Naive thymus-derived CD4-positive, alpha-beta T cell (primary cell): ENCODE measurements at regions of chr14 and their contacts with region 1.

Region 1: DNA sequence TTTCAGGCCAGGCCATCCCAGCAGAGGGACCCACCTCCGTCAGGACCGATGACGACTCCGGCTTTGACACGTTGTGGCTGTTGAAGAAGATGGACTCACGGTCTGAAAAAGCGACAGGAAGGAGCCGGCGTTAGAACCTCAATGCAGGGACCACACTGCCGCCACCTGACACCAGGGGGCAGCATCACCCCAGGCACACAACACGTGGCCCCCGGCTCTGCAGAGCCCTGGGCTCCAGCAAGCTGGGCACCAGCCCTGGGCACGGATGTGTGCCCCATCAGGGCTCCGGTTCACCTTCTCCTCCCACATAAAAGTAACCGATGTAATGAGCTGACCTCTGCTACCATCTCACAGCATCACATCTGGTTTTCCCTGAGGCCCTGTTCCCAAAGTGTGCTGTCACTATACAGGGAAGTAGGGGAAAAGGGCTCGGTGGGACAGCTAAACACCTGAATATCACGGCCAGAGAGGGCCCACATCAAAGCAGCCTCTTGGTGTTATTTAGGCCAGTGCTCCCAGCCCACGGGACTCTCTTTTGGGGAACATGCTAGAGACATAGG is 29.0 kb downstream of the CHGA start:
- DNase-seq: peak; percentile 48 to 84 (median 74)
- ATAC-seq: peak; percentile 93
- H3K4me3 ChIP-seq: no peak overlapping the region
- H3K4me3 Mint-ChIP-seq: no peak overlapping the region
- H3K27ac ChIP-seq: no peak overlapping the region
- H3K27ac Mint-ChIP-seq: peak overlapping the region in 1 of 9 donors; percentile 26
- H3K4me1 ChIP-seq: no peaks in the 10 kb centered on the region
- H3K4me1 Mint-ChIP-seq: peaks cover 0 to 9% (median 5%) of the 10 kb centered on the region in 7 donors
- H3K27me3 ChIP-seq: no peaks in the 10 kb centered on the region
- H3K27me3 Mint-ChIP-seq: no peaks in the 10 kb centered on the region

Region 2: DNA sequence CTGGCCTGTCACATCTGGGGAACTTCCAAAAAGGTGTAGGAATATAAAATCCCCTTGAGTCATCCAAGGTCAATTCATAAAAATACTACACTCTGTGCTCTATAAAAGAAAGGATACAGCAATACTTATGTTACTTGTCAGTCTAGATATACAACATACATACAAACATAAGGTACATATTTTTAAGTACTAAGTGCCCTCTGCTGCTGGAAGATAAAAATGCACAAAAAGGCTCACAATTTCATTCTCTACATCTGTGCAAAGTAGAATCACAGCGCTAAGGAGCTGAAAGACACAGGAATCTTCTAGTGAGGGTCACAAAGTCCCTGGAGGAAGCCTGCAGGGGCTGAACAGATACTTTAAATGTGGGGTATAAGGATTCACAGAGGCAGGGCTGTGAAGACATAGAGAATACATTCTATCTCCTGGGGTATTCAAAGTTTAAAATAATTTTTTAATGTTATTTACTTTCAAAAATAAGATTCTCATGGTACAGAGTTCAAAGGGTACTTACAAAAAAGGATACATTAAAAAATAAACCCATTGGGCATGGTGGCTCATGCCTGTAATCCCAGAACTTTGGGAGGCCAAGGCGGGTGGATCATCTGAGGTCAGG is 168.1 kb before region 1 on chr14:
- CTCF ChIA-PET with region 1: no interaction called
- POLR2A ChIA-PET with region 1: no interaction called
- intact Hi-C with region 1: no loop called
- DNase-seq: peak in 7 of 9 donors; percentile 31 to 65 (median 47)
- ATAC-seq: peak; percentile 81
- H3K4me3 ChIP-seq: no peak overlapping the region
- H3K4me3 Mint-ChIP-seq: no peak overlapping the region
- H3K27ac ChIP-seq: no peak overlapping the region
- H3K27ac Mint-ChIP-seq: no peak overlapping the region
- H3K4me1 ChIP-seq: no peaks in the 10 kb centered on the region
- H3K4me1 Mint-ChIP-seq: peaks cover 0 to 20% (median 0%) of the 10 kb centered on the region in 7 donors
- H3K27me3 ChIP-seq: no peaks in the 10 kb centered on the region
- H3K27me3 Mint-ChIP-seq: peaks cover 0 to 4% (median 0%) of the 10 kb centered on the region in 5 donors

Region 3: GRCh38 chr14:93033983-93034670 is 82.1 kb after region 1 on chr14:
- CTCF ChIA-PET with region 1: no interaction called
- POLR2A ChIA-PET with region 1: no interaction called
- intact Hi-C with region 1: no loop called
- DNase-seq: peak in 7 of 9 donors; percentile 15 to 31 (median 29)
- ATAC-seq: peak; percentile 71
- H3K4me3 ChIP-seq: no peak overlapping the region
- H3K4me3 Mint-ChIP-seq: peak overlapping the region; percentile 17 to 79 (median 51)
- H3K27ac ChIP-seq: no peak overlapping the region
- H3K27ac Mint-ChIP-seq: peak overlapping the region in 8 of 9 donors; percentile 65 to 91 (median 72)
- H3K4me1 ChIP-seq: peaks cover 13 to 17% of the 10 kb centered on the region in 2 donors
- H3K4me1 Mint-ChIP-seq: peaks cover 21 to 34% (median 26%) of the 10 kb centered on the region in 7 donors
- H3K27me3 ChIP-seq: no peaks in the 10 kb centered on the region
- H3K27me3 Mint-ChIP-seq: no peaks in the 10 kb centered on the region

Region 4: GRCh38 chr14:93056166-93056839 is 104.3 kb after region 1 on chr14:
- CTCF ChIA-PET with region 1: no interaction called
- POLR2A ChIA-PET with region 1: no interaction called
- intact Hi-C with region 1: no loop called
- DNase-seq: no peak
- ATAC-seq: peak; percentile 34
- H3K4me3 ChIP-seq: no peak overlapping the region
- H3K4me3 Mint-ChIP-seq: no peak overlapping the region
- H3K27ac ChIP-seq: no peak overlapping the region
- H3K27ac Mint-ChIP-seq: peak overlapping the region in 1 of 9 donors; percentile 54
- H3K4me1 ChIP-seq: peaks cover 0 to 7% of the 10 kb centered on the region in 2 donors
- H3K4me1 Mint-ChIP-seq: peaks cover 10 to 29% (median 17%) of the 10 kb centered on the region in 7 donors
- H3K27me3 ChIP-seq: no peaks in the 10 kb centered on the region
- H3K27me3 Mint-ChIP-seq: no peaks in the 10 kb centered on the region

Region 5: GRCh38 chr14:93137864-93138263 is 185.9 kb after region 1 on chr14:
- CTCF ChIA-PET with region 1: interaction called, 7 read pairs
- POLR2A ChIA-PET with region 1: no interaction called
- intact Hi-C with region 1: loop called (anchors 1 kb)
- DNase-seq: no peak
- ATAC-seq: no peak
- H3K4me3 ChIP-seq: no peak overlapping the region
- H3K4me3 Mint-ChIP-seq: no peak overlapping the region
- H3K27ac ChIP-seq: no peak overlapping the region
- H3K27ac Mint-ChIP-seq: no peak overlapping the region
- H3K4me1 ChIP-seq: no peaks in the 10 kb centered on the region
- H3K4me1 Mint-ChIP-seq: peaks cover 2 to 6% (median 4%) of the 10 kb centered on the region in 7 donors
- H3K27me3 ChIP-seq: no peaks in the 10 kb centered on the region
- H3K27me3 Mint-ChIP-seq: no peaks in the 10 kb centered on the region

Region 6: GRCh38 chr14:93173943-93174395 is 222.0 kb after region 1 on chr14:
- CTCF ChIA-PET with region 1: no interaction called
- POLR2A ChIA-PET with region 1: no interaction called
- intact Hi-C with region 1: loop called (anchors 1 to 2 kb)
- DNase-seq: no peak
- ATAC-seq: no peak
- H3K4me3 ChIP-seq: no peak overlapping the region
- H3K4me3 Mint-ChIP-seq: no peak overlapping the region
- H3K27ac ChIP-seq: no peak overlapping the region
- H3K27ac Mint-ChIP-seq: no peak overlapping the region
- H3K4me1 ChIP-seq: no peaks in the 10 kb centered on the region
- H3K4me1 Mint-ChIP-seq: peaks cover 0 to 4% (median 0%) of the 10 kb centered on the region in 7 donors
- H3K27me3 ChIP-seq: no peaks in the 10 kb centered on the region
- H3K27me3 Mint-ChIP-seq: no peaks in the 10 kb centered on the region

Region 7: GRCh38 chr14:93219103-93219726 is 267.2 kb after region 1 on chr14:
- CTCF ChIA-PET with region 1: interaction called, 5 read pairs
- POLR2A ChIA-PET with region 1: no interaction called
- intact Hi-C with region 1: loop called in 1 of 2 experiments (anchors 1 kb)
- DNase-seq: peak in 7 of 9 donors; percentile 27 to 66 (median 56)
- ATAC-seq: peak; percentile 87
- H3K4me3 ChIP-seq: no peak overlapping the region
- H3K4me3 Mint-ChIP-seq: no peak overlapping the region
- H3K27ac ChIP-seq: no peak overlapping the region
- H3K27ac Mint-ChIP-seq: no peak overlapping the region
- H3K4me1 ChIP-seq: no peaks in the 10 kb centered on the region
- H3K4me1 Mint-ChIP-seq: peaks cover 0 to 4% (median 0%) of the 10 kb centered on the region in 7 donors
- H3K27me3 ChIP-seq: no peaks in the 10 kb centered on the region
- H3K27me3 Mint-ChIP-seq: no peaks in the 10 kb centered on the region